AG04450 (cell line): ENCODE measurements at regions of chr1 and their contacts with region 1.

Region 1: DNA sequence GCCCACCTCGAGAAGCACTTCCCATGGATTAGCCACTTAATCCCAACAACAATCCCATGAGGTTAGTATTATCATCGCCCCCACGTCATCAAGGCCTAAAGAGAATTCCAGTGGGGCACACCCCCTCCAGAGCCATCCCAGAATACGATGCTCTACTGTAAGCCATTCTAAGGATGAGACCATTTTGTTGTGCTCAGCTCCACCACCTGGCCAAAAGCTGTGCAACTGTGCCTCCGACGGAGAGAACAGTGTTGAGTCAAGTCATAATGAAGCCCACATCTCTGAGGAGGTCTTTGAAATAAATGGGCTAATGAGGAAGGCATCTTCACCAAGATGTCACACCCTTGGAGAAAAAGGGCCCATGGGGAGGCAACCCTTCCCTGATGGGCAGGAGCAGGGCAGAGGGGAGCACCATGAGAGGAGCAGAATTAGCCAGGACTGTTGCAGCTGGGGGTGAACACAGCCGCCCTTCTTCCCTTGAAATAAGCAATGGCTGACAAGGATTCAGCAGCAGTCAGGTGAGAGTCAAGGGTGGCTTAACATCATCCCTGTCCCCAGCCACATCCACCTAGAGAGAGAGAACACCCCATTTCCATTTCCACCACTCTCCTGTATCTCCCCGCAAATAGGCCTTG is 14.6 kb downstream of the SYF2 start:
- DNase-seq: no peak
- H3K4me3 ChIP-seq: no peak overlapping the region
- H3K27ac ChIP-seq: no peak overlapping the region
- H3K27me3 ChIP-seq: no peaks in the 10 kb centered on the region
- CTCF ChIP-seq: no peak

Region 2: GRCh38 chr1:24500448-24501048 is 717.2 kb before region 1 on chr1:
- CTCF ChIA-PET with region 1: no interaction called
- POLR2A ChIA-PET with region 1: interaction called, 11 read pairs
- DNase-seq: no peak
- H3K4me3 ChIP-seq: no peak overlapping the region
- H3K27ac ChIP-seq: no peak overlapping the region
- H3K27me3 ChIP-seq: peaks cover 23% of the 10 kb centered on the region
- CTCF ChIP-seq: no peak

Region 3: GRCh38 chr1:25232027-25232865 is 14.5 kb after region 1 on chr1 and contains the start of gene SYF2:
- CTCF ChIA-PET with region 1: no interaction called
- POLR2A ChIA-PET with region 1: no interaction called
- DNase-seq: peak; percentile 83
- H3K4me3 ChIP-seq: peak within 1 kb of the TSS; percentile 95
- H3K27ac ChIP-seq: peak within 1 kb of the TSS; percentile 89
- H3K27me3 ChIP-seq: no peaks in the 10 kb centered on the region
- CTCF ChIP-seq: no peak
- polyA plus RNA-seq, gene SYF2: 33.7 and 48.3 TPM in 2 replicates

Region 4: GRCh38 chr1:26826261-26827105 is 1608.8 kb after region 1 on chr1 and contains the start of gene ZDHHC18:
- CTCF ChIA-PET with region 1: no interaction called
- POLR2A ChIA-PET with region 1: interaction called, 10 read pairs
- DNase-seq: no peak
- H3K4me3 ChIP-seq: peak within 1 kb of the TSS; percentile 75
- H3K27ac ChIP-seq: peak within 1 kb of the TSS; percentile 39
- H3K27me3 ChIP-seq: no peaks in the 10 kb centered on the region
- CTCF ChIP-seq: peak; percentile 28; the same call in 1 of the 2 replicates
- polyA plus RNA-seq, gene ZDHHC18: 20.4 and 29.2 TPM in 2 replicates